ENCODE measurements at regions of chr4 and their contacts with region 1.

Region 1: DNA sequence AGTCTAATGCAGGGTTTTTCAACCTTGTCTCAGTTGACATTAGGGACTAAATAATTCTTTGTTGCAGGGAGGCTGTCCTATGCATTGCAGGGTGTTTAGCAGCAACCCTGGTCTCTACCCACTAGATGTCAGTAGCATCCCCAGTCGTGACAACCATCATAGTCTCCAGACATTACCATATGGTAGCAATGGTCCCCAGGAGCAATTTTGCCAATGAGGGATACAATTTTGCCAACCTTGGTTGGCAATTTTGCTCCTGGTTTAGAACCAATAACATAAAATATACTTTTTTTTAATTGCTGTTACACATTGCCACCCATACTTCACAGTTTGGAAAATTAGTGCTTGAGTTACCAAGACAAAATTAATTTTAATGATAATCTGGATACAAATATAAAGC is 6.0 kb downstream of the EREG start:
- DNase-seq: peak; percentile 30
- H3K4me3 ChIP-seq: no peak overlapping the region
- H3K27ac ChIP-seq: no peak overlapping the region
- H3K4me1 ChIP-seq: no peaks in the 10 kb centered on the region
- CTCF ChIP-seq: peak; percentile 78

Region 2: GRCh38 chr4:74157561-74158465 is 213.1 kb before region 1 on chr4 and contains the start of gene MTHFD2L:
- CTCF ChIA-PET with region 1: no interaction called
- POLR2A ChIA-PET with region 1: no interaction called
- intact Hi-C with region 1: no loop called
- DNase-seq: peak; percentile 88
- H3K4me3 ChIP-seq: peak within 1 kb of the TSS; percentile 85
- H3K27ac ChIP-seq: peak within 1 kb of the TSS; percentile 35
- H3K4me1 ChIP-seq: peaks cover 14% of the 10 kb centered on the region
- CTCF ChIP-seq: no peak
- total RNA-seq, gene MTHFD2L: 18.5 and 18.9 TPM in 2 replicates

Region 3: DNA sequence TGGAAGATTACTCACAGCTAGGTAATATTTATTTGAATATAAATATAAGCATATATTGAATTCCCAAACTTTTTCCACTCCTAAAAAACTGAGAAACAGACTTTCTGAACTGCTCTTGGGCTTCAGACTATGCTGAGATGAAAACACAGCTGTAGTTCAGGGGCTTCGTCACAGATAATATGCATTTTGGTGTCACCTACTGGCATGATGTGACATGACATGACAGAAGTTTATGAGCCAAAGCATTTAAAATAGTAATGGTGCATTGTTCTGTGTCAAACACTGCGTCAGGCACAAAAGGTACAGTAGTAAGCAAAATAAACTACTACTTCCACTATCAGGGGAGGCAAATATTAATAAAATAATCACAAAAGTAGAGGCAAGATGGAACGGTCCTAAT is 252.1 kb after region 1 on chr4:
- CTCF ChIA-PET with region 1: no interaction called
- POLR2A ChIA-PET with region 1: no interaction called
- intact Hi-C with region 1: loop called (anchors 2 kb)
- DNase-seq: peak; percentile 31
- H3K4me3 ChIP-seq: no peak overlapping the region
- H3K27ac ChIP-seq: no peak overlapping the region
- H3K4me1 ChIP-seq: no peaks in the 10 kb centered on the region
- CTCF ChIP-seq: peak; percentile 75

Region 4: GRCh38 chr4:74658114-74658513 is 287.2 kb after region 1 on chr4:
- CTCF ChIA-PET with region 1: no interaction called
- POLR2A ChIA-PET with region 1: no interaction called
- intact Hi-C with region 1: no loop called
- DNase-seq: no peak
- H3K4me3 ChIP-seq: no peak overlapping the region
- H3K27ac ChIP-seq: no peak overlapping the region
- H3K4me1 ChIP-seq: no peaks in the 10 kb centered on the region
- CTCF ChIP-seq: no peak

Region 5: GRCh38 chr4:74838746-74839370 is 467.9 kb after region 1 on chr4:
- CTCF ChIA-PET with region 1: no interaction called
- POLR2A ChIA-PET with region 1: no interaction called
- intact Hi-C with region 1: no loop called
- DNase-seq: no peak
- H3K4me3 ChIP-seq: no peak overlapping the region
- H3K27ac ChIP-seq: no peak overlapping the region
- H3K4me1 ChIP-seq: no peaks in the 10 kb centered on the region
- CTCF ChIP-seq: no peak

Measured in OCI-LY7 (cell line).